Breast epithelium (tissue), 4 donors: ENCODE measurements at regions of chr20 and their contacts with region 1.

Region 1: GRCh38 chr20:38369389-38369788 is 23.1 kb downstream of the LBP start:
- DNase-seq: no peak
- H3K4me3 ChIP-seq: no peak overlapping the region
- H3K27ac ChIP-seq: no peak overlapping the region
- H3K4me1 ChIP-seq: no peaks in the 10 kb centered on the region
- H3K27me3 ChIP-seq: no peaks in the 10 kb centered on the region
- CTCF ChIP-seq: no peak
- POLR2A ChIP-seq: no peak

Region 2: DNA sequence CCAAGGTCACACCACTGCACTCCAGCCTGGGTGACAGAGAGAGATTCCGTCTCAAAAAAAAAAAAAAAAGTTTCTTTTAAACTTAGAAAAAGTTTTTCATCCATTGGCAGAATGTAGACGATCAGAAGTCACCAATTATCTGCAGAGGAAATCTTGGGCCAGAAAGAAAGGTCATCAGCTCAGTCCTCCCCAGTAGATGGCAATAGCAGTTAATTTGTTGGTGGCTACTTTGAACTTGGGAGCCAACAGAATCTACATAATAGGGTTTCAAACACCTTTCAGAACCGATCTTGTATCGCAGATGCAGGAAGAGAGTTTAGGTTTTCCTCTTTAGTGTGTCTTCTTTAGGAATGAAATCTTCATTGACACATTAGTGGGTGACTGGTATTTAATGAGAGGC is 18.6 kb after region 1 on chr20:
- intact Hi-C with region 1: loop called (anchors 2 kb)
- DNase-seq: no peak
- H3K4me3 ChIP-seq: no peak overlapping the region
- H3K27ac ChIP-seq: no peak overlapping the region
- H3K4me1 ChIP-seq: no peaks in the 10 kb centered on the region
- H3K27me3 ChIP-seq: no peaks in the 10 kb centered on the region
- CTCF ChIP-seq: no peak
- POLR2A ChIP-seq: no peak